Right ventricle myocardium inferior (tissue), 1 donor: ENCODE measurements at regions of chr10 and their contacts with region 1.

Region 1: GRCh38 chr10:102776779-102777456 is 33.2 kb downstream of the WBP1L start:
- DNase-seq: peak; percentile 85
- ATAC-seq: peak; percentile 87

Region 2: GRCh38 chr10:102796407-102797176 is 19.7 kb after region 1 on chr10:
- intact Hi-C with region 1: loop called (anchors 1 kb)
- DNase-seq: peak; percentile 95
- ATAC-seq: peak; percentile 97

Region 3: GRCh38 chr10:102815790-102816549 is 39.1 kb after region 1 on chr10:
- intact Hi-C with region 1: loop called (anchors 5 kb)
- DNase-seq: peak; percentile 81
- ATAC-seq: peak; percentile 65